Activated CD4-positive, alpha-beta T cell treated with anti-CD3 and anti-CD28 coated beads for 36 hours (primary cell): ENCODE measurements at regions of chr15 and their contacts with region 1.

Region 1: GRCh38 chr15:41972253-41973242 is at the start of gene EHD4:
- DNase-seq: peak; percentile 98
- ATAC-seq: peak; percentile 80
- H3K4me3 Mint-ChIP-seq: peak within 1 kb of the TSS; percentile 86
- H3K27ac Mint-ChIP-seq: peak within 1 kb of the TSS; percentile 94
- H3K4me1 Mint-ChIP-seq: peaks cover 53% of the 10 kb centered on the region
- H3K27me3 Mint-ChIP-seq: peaks cover 8% of the 10 kb centered on the region
- total RNA-seq, gene EHD4: 34.7 to 35.7 TPM

Region 2: DNA sequence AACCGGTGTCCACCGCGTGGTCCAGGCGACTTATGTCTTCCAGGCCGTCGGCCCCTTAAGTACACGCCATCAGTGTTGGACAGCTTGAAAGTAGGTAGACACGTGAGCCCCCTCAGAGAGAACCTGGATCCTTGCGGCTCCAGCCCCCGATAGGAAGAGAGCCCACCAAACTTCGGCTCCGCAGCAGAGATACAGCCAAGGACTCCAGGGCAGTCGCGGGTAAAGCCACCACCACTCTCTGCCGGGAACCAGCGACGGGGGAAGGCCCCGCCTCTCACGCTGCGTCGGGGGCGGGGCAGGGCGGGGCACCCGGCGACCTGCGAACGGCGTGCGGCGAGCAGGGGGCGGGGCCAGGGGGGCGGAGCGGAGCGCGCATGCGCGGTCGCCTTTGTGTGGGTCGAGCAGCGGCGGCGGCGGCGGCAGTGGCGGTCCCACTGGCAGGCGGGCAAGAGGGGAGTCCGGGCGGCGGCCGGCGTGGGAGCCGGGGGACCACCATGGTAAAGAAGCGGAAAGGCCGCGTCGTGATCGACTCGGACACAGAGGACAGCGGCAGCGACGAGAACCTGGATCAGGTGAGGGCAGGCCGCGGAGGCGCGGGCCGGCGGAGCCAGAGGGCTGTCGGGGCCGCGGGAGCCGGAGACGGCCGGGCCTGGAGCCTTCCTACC is 555.7 kb before region 1 on chr15 and contains the start of gene RTF1:
- CTCF ChIA-PET with region 1: no interaction called
- POLR2A ChIA-PET with region 1: no interaction called
- intact Hi-C with region 1: loop called in 1 of 2 experiments (anchors 1 kb)
- DNase-seq: peak; percentile 98
- ATAC-seq: peak; percentile 94
- H3K4me3 Mint-ChIP-seq: peak within 1 kb of the TSS; percentile 88
- H3K27ac Mint-ChIP-seq: peak within 1 kb of the TSS; percentile 92
- H3K4me1 Mint-ChIP-seq: peaks cover 38% of the 10 kb centered on the region
- H3K27me3 Mint-ChIP-seq: no peaks in the 10 kb centered on the region
- total RNA-seq, gene RTF1: 29.4 to 32.3 TPM

Region 3: GRCh38 chr15:41936649-41937567 is 35.6 kb before region 1 on chr15:
- CTCF ChIA-PET with region 1: interaction called, 43 read pairs
- POLR2A ChIA-PET with region 1: interaction called, 68 read pairs
- intact Hi-C with region 1: loop called (anchors 1 kb)
- DNase-seq: peak; percentile 91
- ATAC-seq: peak; percentile 62
- H3K4me3 Mint-ChIP-seq: peak overlapping the region; percentile 60
- H3K27ac Mint-ChIP-seq: peak overlapping the region; percentile 100
- H3K4me1 Mint-ChIP-seq: peaks cover 74% of the 10 kb centered on the region
- H3K27me3 Mint-ChIP-seq: no peaks in the 10 kb centered on the region

Region 4: DNA sequence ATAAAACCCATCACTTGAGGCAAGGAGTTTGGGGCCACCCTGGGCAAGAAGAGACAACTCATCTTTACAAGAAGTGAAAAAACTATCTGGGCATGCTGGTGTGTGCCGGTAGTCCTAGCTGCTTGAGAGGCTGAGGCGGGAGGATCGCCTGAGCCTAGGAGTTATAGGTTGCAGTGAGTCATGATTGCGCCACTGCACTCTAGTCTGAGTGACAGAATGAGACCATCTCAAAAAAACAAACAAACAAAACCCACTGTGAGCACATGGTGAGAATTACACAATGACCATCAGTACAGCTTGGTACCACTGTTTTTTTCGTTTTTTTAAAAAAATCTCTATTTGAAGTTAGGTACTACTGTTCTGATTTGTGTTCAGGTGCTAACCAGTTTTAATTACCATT is 222.0 kb after region 1 on chr15:
- CTCF ChIA-PET with region 1: no interaction called
- POLR2A ChIA-PET with region 1: no interaction called
- intact Hi-C with region 1: loop called in 1 of 2 experiments (anchors 2 kb)
- DNase-seq: peak; percentile 37
- ATAC-seq: peak; percentile 24
- H3K4me3 Mint-ChIP-seq: no peak overlapping the region
- H3K27ac Mint-ChIP-seq: peak overlapping the region; percentile 93
- H3K4me1 Mint-ChIP-seq: peaks cover 55% of the 10 kb centered on the region
- H3K27me3 Mint-ChIP-seq: no peaks in the 10 kb centered on the region

Region 5: DNA sequence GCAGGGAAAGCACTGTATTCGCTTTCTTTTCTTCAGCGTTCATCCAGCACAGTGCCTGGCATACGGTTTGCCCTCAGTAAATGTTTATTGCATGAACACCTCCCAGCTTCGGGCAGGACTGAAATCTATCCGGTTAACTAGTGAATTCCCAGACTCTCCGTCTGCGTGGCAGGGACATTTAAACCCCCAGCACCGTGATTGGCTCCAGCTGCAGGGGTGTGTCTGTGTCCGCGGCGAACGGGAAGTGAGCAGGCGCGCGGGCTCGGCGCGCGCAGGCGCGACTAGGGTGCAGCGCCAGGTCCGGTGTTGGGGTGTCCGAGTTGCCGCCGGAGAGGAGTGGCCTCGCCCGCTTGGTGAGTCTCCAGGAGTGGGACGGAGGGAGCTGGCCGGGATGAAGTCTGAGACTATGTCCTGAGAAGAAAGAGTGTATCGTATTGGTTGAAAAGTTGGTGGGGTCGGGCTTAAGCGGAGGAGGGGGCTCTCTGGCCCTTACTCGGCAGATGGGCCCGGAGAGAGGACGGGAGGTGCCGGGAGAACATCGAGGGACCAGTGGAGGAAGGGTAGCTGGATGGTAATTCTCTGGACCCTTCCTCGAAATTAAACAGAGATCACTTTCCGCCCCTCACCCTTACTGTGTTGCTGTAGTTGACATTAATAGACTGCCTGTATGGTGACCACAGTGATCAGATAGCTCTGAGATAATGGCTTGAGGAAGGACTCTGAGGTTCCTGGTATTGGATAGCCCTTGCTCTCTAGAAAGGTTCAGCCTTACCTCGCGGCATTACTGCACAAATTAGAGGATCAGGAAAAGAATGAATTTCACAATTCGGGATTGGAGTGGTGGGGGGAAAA is 523.0 kb after region 1 on chr15 and contains the start of gene SNAP23:
- CTCF ChIA-PET with region 1: no interaction called
- POLR2A ChIA-PET with region 1: no interaction called
- intact Hi-C with region 1: loop called in 1 of 2 experiments (anchors 2 kb)
- DNase-seq: peak; percentile 89
- ATAC-seq: peak; percentile 95
- H3K4me3 Mint-ChIP-seq: peak within 1 kb of the TSS; percentile 96
- H3K27ac Mint-ChIP-seq: peak within 1 kb of the TSS; percentile 97
- H3K4me1 Mint-ChIP-seq: peaks cover 68% of the 10 kb centered on the region
- H3K27me3 Mint-ChIP-seq: no peaks in the 10 kb centered on the region
- total RNA-seq, gene SNAP23: 45.5 to 77.5 TPM

Region 6: GRCh38 chr15:42604894-42605744 is 632.6 kb after region 1 on chr15:
- CTCF ChIA-PET with region 1: no interaction called
- POLR2A ChIA-PET with region 1: no interaction called
- intact Hi-C with region 1: no loop called
- DNase-seq: no peak
- ATAC-seq: no peak
- H3K4me3 Mint-ChIP-seq: no peak overlapping the region
- H3K27ac Mint-ChIP-seq: peak overlapping the region; percentile 53
- H3K4me1 Mint-ChIP-seq: peaks cover 43% of the 10 kb centered on the region
- H3K27me3 Mint-ChIP-seq: no peaks in the 10 kb centered on the region